SK-N-SH (cell line): ENCODE measurements at regions of chr4 and their contacts with region 1.

Region 1: DNA sequence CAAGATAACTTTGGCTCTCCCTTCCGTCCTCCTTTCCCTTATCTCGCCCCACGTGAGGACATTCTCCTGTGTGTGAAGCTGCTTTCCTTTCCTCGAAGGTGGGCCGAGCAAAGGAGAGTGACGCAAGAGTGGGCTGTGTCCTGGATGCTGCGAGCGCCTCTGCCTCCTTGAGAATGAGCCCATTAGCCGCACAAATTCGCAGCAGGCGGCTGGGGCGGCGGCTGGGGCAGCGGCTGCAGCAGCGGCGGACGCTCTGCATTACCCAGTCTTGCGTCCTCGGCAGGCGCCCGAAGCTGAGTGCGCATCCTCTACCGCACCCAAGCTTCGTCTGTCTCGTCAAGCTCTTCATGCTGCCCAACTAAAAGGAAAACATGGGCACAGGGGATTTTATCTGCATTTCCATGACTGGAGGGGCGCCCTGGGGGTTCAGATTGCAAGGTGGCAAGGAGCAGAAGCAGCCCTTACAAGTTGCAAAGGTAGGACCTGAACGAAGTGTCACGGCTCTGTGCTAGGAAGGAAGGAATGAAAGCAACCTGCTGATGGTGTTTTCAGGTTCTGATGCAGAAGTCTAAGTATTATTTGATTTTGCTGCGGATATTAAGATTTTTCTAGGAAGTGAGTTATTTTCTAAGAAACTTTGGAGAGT is at the start of gene SYNPO2:
- DNase-seq: peak; percentile 78
- H3K4me3 ChIP-seq: peak within 1 kb of the TSS; percentile 75 to 91
- H3K27ac ChIP-seq: peak within 1 kb of the TSS; percentile 72 to 89
- H3K4me1 ChIP-seq: peaks cover 0 to 13% of the 10 kb centered on the region in 2 experiments; a peak in 2 of 4 replicates
- H3K27me3 ChIP-seq: no peaks in the 10 kb centered on the region
- CTCF ChIP-seq: no peak
- EP300 ChIP-seq: no peak
- RAD21 ChIP-seq: peak; percentile 8; the same call in 1 of the 2 replicates
- polyA plus RNA-seq, gene SYNPO2: 7.2 and 10.8 TPM in 2 replicates

Region 2: DNA sequence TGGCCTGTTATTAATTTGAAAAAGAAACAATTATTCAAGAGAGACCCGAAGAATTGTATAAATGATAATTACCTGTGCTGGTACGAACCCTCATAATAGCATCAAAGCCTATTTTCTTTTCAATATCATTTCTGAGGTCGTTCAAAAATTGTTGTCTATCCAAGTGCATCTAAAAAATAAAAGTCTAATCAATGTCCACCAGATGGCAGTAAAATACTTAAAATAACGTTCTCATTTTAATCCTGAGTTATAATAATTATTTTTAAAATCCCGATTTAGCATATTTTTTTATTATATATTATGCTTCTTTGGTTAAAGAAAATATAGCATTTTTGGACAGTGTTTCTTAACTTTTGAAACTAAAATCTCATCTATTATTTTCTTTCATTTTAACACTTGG is 147.9 kb before region 1 on chr4:
- CTCF ChIA-PET with region 1: interaction called, 31 read pairs
- POLR2A ChIA-PET with region 1: interaction called, 4 read pairs
- DNase-seq: peak; percentile 10
- H3K4me3 ChIP-seq: no peak overlapping the region
- H3K27ac ChIP-seq: peak overlapping the region; percentile 45 to 86; a peak in 3 of 4 replicates
- H3K4me1 ChIP-seq: peaks cover 0 to 14% of the 10 kb centered on the region in 2 experiments; a peak in 2 of 4 replicates
- H3K27me3 ChIP-seq: no peaks in the 10 kb centered on the region
- CTCF ChIP-seq: peak; percentile 61
- EP300 ChIP-seq: no peak
- RAD21 ChIP-seq: peak; percentile 63

Region 3: DNA sequence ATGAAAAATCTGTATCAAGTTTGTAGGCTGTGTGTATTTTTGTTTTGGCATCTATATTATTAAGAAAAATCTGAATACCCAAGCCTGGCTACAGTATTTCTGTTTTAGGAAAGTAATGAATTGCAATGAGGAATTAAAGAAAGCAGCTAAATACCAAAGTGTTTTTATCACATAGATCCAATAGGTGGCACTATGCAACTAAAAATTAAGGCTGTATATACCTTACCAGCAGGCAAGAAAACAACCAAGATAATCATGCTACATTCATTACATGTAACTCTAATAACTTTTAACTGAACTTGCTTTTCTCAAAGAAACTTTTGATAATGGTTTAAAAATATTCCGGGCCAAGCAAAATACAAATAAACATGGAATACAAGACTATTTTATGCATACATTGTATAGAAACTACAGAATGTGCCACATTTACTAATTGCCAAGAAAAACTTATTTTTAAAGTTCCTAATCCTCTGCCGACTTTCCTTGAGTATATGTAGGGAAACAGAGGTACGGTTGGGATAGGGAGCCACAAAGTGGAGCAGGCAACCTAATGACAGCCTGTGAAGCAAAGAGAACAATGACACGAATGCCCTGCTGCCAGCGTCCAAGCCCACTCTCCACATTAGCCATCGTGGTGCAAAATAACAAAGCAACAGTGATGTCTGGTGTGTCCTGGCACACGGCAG is 116.6 kb before region 1 on chr4:
- CTCF ChIA-PET with region 1: interaction called, 133 read pairs
- POLR2A ChIA-PET with region 1: interaction called, 20 read pairs
- DNase-seq: no peak
- H3K4me3 ChIP-seq: no peak overlapping the region; a peak in 1 of 4 replicates
- H3K27ac ChIP-seq: peak overlapping the region; percentile 69 to 99
- H3K4me1 ChIP-seq: peaks cover 54 to 63% of the 10 kb centered on the region in 2 experiments
- H3K27me3 ChIP-seq: no peaks in the 10 kb centered on the region
- CTCF ChIP-seq: peak; percentile 77
- EP300 ChIP-seq: no peak
- RAD21 ChIP-seq: peak; percentile 88

Region 4: GRCh38 chr4:118865091-118865708 is 23.6 kb before region 1 on chr4:
- CTCF ChIA-PET with region 1: interaction called, 30 read pairs
- POLR2A ChIA-PET with region 1: interaction called, 5 read pairs
- DNase-seq: peak; percentile 62
- H3K4me3 ChIP-seq: peak overlapping the region in 1 of 2 experiments; percentile 6; a peak in 1 of 4 replicates
- H3K27ac ChIP-seq: peak overlapping the region; percentile 1 to 71; a peak in 2 of 4 replicates
- H3K4me1 ChIP-seq: peaks cover 9 to 14% of the 10 kb centered on the region in 2 experiments; a peak in 3 of 4 replicates
- H3K27me3 ChIP-seq: no peaks in the 10 kb centered on the region
- CTCF ChIP-seq: peak; percentile 78
- EP300 ChIP-seq: no peak
- RAD21 ChIP-seq: peak; percentile 73

Region 5: GRCh38 chr4:118911238-118911703 is 22.5 kb after region 1 on chr4:
- CTCF ChIA-PET with region 1: interaction called, 20 read pairs
- POLR2A ChIA-PET with region 1: interaction called, 4 read pairs
- DNase-seq: no peak
- H3K4me3 ChIP-seq: peak overlapping the region; percentile 14 to 16; a peak in 3 of 4 replicates
- H3K27ac ChIP-seq: peak overlapping the region; percentile 88 to 91
- H3K4me1 ChIP-seq: peaks cover 12 to 53% of the 10 kb centered on the region in 2 experiments; a peak in 2 of 4 replicates
- H3K27me3 ChIP-seq: no peaks in the 10 kb centered on the region
- CTCF ChIP-seq: no peak
- EP300 ChIP-seq: peak; percentile 88 to 98
- RAD21 ChIP-seq: no peak

Region 6: DNA sequence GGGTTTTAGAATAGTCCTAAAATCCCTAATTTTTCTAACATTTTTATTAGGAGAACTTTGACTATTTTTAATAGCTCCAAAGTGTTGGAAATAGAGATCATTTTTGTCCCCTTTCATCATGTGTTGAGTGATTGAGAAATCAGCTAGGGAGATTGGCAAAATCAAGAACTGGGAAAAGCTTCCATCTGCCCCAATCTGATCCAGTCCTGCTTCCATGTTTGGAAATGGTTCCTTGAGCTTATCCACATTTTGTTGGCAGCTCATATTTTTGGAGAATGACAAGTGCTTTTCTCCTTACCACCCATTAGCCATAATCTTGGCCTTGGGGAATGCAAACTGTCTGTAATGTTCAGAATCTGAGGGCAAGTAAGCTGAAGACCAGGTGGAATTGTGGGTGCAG is 73.8 kb after region 1 on chr4:
- CTCF ChIA-PET with region 1: interaction called, 111 read pairs
- POLR2A ChIA-PET with region 1: interaction called, 4 read pairs
- DNase-seq: no peak
- H3K4me3 ChIP-seq: no peak overlapping the region
- H3K27ac ChIP-seq: peak overlapping the region in 1 of 2 experiments; percentile 36; a peak in 2 of 4 replicates
- H3K4me1 ChIP-seq: peaks cover 6 to 28% of the 10 kb centered on the region in 2 experiments
- H3K27me3 ChIP-seq: no peaks in the 10 kb centered on the region
- CTCF ChIP-seq: no peak
- EP300 ChIP-seq: no peak
- RAD21 ChIP-seq: no peak

Region 7: DNA sequence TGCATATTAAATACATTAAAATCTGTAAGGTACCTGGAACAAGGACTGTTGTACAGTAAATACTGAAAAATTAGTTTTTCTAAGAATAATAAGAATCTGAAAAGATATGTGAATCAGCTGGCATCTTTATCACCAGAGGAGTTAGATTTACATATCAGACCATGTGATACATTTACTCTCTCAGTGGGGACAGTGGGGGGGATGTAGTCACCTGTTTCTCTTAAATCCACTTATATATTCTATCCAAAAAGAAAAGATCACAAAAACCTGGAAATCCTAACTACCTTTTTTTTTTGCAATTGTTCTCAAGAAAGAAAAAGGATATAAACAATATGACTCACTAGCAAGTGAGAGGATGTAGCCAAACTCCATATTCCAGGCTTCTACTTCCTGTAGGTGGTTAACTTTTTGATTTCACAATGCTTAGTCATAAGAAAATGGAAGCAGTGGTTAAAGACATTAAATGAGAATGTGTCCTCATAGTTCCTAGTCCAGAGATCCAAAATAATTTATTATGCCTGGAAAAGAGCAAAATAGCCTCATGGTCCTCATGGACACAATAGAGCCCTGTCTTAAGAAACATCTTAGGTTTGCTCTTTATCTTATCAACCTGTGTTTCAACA is 224.4 kb after region 1 on chr4:
- CTCF ChIA-PET with region 1: no interaction called
- POLR2A ChIA-PET with region 1: no interaction called
- DNase-seq: no peak
- H3K4me3 ChIP-seq: no peak overlapping the region
- H3K27ac ChIP-seq: peak overlapping the region; percentile 11 to 85; a peak in 3 of 4 replicates
- H3K4me1 ChIP-seq: peaks cover 0 to 8% of the 10 kb centered on the region in 2 experiments; a peak in 1 of 4 replicates
- H3K27me3 ChIP-seq: no peaks in the 10 kb centered on the region
- CTCF ChIP-seq: no peak
- EP300 ChIP-seq: peak in 1 of 2 experiments; percentile 79; a peak in 1 of 4 replicates
- RAD21 ChIP-seq: no peak

Region 8: GRCh38 chr4:119197772-119198212 is 309.0 kb after region 1 on chr4:
- CTCF ChIA-PET with region 1: no interaction called
- POLR2A ChIA-PET with region 1: no interaction called
- DNase-seq: no peak
- H3K4me3 ChIP-seq: no peak overlapping the region
- H3K27ac ChIP-seq: no peak overlapping the region
- H3K4me1 ChIP-seq: no peaks in the 10 kb centered on the region
- H3K27me3 ChIP-seq: no peaks in the 10 kb centered on the region
- CTCF ChIP-seq: no peak
- EP300 ChIP-seq: no peak
- RAD21 ChIP-seq: no peak